A673 (cell line): ENCODE measurements at regions of chr2 and their contacts with region 1.

Region 1: GRCh38 chr2:37389989-37390765 is 45.7 kb downstream of the QPCT start:
- DNase-seq: peak; percentile 81
- H3K4me3 ChIP-seq: no peak overlapping the region
- H3K27ac ChIP-seq: peak overlapping the region; percentile 39
- H3K4me1 ChIP-seq: peaks cover 6% of the 10 kb centered on the region
- H3K27me3 ChIP-seq: no peaks in the 10 kb centered on the region
- CTCF ChIP-seq: no peak

Region 2: DNA sequence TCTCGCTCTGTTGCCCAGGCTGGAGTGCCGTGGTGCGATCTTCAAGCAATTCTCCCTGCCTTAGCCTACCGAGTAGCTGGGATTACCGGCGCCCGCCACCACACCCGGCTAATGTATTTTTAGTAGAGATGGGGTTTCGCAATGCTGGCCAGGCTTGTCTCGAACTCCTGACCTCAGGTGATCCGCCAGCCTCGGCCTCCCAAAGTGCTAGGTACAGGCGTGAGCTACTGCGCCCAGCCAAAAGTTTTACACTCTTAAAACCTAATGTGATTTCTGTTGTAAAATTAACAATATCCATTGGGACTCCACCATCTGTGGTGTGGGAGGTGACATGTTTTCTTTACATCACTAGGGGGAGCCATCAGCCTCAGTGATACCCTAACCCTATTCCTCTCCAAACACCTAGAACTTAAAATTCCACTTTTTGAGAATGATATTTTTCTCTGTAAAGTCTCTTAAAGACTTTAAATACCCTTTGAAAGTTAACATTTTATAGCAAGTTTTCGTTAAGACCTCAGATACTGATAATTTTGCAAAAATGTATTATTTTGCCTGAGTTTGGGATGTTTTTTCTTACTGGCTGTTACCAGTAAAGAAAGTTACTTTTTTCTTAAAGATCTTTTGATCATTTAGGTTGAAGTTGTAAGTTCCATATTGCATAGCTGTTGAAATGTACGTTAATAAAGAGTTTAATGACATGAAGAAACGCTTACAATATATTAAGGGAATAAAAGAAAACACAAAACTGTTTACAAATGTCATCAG is 221.8 kb before region 1 on chr2:
- CTCF ChIA-PET with region 1: no interaction called
- POLR2A ChIA-PET with region 1: no interaction called
- intact Hi-C with region 1: loop called (anchors 5 kb)
- DNase-seq: peak; percentile 75
- H3K4me3 ChIP-seq: no peak overlapping the region
- H3K27ac ChIP-seq: no peak overlapping the region
- H3K4me1 ChIP-seq: no peaks in the 10 kb centered on the region
- H3K27me3 ChIP-seq: no peaks in the 10 kb centered on the region
- CTCF ChIP-seq: peak; percentile 83

Region 3: DNA sequence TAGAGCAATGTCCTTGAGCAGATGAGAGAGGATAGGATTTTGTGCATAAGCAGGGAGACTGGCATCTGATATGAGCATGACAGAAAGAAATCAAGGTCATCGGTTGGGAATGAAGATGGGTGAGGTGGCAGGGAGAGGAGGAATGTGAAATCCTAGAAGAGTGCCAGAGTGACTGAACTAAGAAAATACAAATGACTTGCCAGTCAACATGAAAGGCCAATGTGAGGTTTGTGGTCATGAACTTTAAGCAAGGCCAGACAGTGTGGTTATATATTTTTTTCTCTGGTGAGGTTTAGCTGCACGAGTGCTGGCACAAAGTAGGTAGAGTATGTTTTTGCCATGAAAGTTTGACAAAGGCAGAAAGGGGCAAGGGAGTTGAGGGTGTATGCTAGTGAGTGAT is 24.5 kb before region 1 on chr2:
- CTCF ChIA-PET with region 1: no interaction called
- POLR2A ChIA-PET with region 1: no interaction called
- intact Hi-C with region 1: no loop called
- DNase-seq: no peak
- H3K4me3 ChIP-seq: no peak overlapping the region
- H3K27ac ChIP-seq: no peak overlapping the region
- H3K4me1 ChIP-seq: no peaks in the 10 kb centered on the region
- H3K27me3 ChIP-seq: no peaks in the 10 kb centered on the region
- CTCF ChIP-seq: no peak

Region 4: GRCh38 chr2:37537316-37537715 is 147.1 kb after region 1 on chr2:
- CTCF ChIA-PET with region 1: no interaction called
- POLR2A ChIA-PET with region 1: no interaction called
- intact Hi-C with region 1: no loop called
- DNase-seq: no peak
- H3K4me3 ChIP-seq: no peak overlapping the region
- H3K27ac ChIP-seq: no peak overlapping the region
- H3K4me1 ChIP-seq: no peaks in the 10 kb centered on the region
- H3K27me3 ChIP-seq: no peaks in the 10 kb centered on the region
- CTCF ChIP-seq: no peak

Region 5: DNA sequence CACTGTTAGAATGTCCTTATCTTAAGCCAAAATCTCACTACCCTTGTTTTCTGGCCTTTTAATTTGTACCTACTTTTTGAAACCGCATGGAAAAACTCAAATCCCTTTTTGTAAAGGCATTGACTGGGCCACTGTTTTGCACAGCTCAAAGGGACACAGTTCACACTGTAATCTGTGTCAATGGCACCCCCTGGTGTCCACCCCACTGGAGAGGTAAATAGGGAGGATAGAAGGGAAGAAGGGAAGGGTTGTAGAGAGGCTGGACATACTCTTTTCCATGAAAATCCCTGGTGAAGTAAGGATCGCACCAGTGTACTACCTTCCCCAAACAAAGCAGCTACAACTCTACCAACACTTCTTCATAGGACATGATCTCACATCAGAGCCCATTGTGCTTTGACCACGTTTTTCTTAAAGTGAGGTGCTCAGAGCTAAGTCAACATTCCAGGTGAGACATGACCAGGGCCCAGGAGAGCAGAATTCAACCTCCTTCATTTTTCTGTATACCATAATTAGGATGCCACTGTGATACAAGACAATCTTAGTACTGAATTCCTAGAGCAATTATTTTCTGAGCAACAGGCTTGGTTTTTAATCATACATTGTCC is 442.5 kb after region 1 on chr2:
- CTCF ChIA-PET with region 1: interaction called, 22 read pairs
- POLR2A ChIA-PET with region 1: no interaction called
- intact Hi-C with region 1: loop called (anchors 5 kb)
- DNase-seq: peak; percentile 83
- H3K4me3 ChIP-seq: no peak overlapping the region
- H3K27ac ChIP-seq: no peak overlapping the region
- H3K4me1 ChIP-seq: peaks cover 13% of the 10 kb centered on the region
- H3K27me3 ChIP-seq: no peaks in the 10 kb centered on the region
- CTCF ChIP-seq: peak; percentile 75

Region 6: GRCh38 chr2:37877457-37878315 is 487.5 kb after region 1 on chr2:
- CTCF ChIA-PET with region 1: interaction called, 46 read pairs
- POLR2A ChIA-PET with region 1: no interaction called
- intact Hi-C with region 1: no loop called
- DNase-seq: peak; percentile 75
- H3K4me3 ChIP-seq: no peak overlapping the region
- H3K27ac ChIP-seq: no peak overlapping the region
- H3K4me1 ChIP-seq: peaks cover 3% of the 10 kb centered on the region
- H3K27me3 ChIP-seq: peaks cover 17% of the 10 kb centered on the region
- CTCF ChIP-seq: peak; percentile 77